ENCODE measurements at regions of chrX and their contacts with region 1.

Region 1: DNA sequence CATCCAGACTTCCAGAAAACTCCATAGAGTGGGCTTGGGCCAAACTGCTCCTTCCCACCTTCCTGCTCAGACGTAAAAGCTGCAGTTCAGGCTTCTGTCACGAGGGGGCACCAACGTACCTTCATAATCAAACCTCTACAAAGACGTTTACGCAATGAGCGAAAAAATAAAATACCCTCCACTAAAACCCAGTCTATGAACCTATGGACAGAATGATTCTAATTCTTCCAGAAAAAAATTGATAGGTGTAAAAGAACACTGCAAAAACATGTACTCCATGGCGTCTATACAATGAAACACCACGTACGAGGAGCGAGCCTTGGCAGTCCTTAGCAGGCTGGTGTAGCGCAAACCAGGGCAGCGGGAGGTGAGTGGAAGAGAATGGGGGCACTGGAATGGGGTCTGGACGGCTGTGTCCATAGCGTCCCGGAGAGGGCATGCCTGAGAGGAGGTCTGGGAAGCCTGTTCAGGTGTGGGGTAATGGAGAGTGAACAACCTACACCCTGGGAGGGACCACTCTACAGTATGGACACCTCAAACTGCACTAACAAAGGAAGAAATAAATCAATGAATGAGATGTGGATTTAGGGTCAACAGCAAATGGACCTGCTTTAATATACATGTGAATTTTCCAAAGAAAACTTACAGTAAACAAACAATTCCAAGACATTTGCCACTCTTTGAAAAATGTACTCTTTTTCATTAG is 14.4 kb upstream of the RAB40A start:
- DNase-seq: peak; percentile 74
- ATAC-seq: peak; percentile 63 to 75

Region 2: GRCh38 chrX:103404231-103405208 is 129.1 kb before region 1 on chrX:
- intact Hi-C with region 1: no loop called
- DNase-seq: peak; percentile 73
- ATAC-seq: peak; percentile 86 to 89

Region 3: GRCh38 chrX:103629318-103630170 is 95.9 kb after region 1 on chrX:
- intact Hi-C with region 1: loop called in 1 of 2 experiments (anchors 5 kb)
- DNase-seq: peak; percentile 74
- ATAC-seq: peak; percentile 90 to 97

Region 4: DNA sequence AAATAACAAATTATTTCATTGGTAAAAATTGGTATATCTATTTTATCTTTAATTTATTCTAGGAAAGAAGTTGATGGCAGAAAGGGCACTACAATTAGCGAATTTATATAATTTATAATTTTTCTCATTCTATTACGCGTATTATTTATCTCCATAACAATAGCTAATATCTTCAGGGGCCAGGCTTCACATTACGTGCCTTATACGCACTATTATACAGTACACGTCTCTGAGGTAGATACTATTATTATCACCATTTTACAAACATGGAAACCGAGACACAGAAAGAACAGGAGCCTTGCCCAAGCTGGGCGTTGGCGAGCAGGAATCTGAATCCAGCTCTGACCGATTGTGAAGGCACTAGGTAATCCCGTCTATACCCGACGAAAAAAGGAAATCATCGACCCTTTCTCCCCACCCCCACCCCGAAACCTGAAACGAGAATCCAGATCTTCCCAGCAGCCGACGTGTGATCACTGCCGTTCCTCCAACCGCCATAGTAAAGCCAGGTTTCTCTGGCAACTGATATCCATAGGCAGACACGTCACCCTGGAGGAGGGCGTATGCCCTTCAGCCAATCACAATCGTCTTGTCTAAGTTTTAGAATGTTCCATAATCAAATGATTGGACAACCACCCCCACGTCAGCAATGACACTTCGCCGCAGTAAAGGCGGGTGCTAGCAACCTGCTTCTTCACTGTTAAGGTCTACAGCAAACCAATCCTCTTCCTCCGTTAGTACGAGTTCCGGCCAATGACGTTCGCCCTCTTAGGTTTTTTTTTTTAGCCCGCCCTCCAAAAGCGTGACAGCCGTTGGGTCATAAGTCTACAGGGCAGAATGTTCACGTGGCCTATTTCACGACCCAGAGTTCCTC is 152.8 kb after region 1 on chrX and contains the start of gene MORF4L2:
- intact Hi-C with region 1: loop called in 1 of 2 experiments (anchors 10 kb)
- DNase-seq: peak; percentile 90
- ATAC-seq: peak; percentile 90 to 94
- total RNA-seq, gene MORF4L2: 191 to 248 TPM

Region 5: DNA sequence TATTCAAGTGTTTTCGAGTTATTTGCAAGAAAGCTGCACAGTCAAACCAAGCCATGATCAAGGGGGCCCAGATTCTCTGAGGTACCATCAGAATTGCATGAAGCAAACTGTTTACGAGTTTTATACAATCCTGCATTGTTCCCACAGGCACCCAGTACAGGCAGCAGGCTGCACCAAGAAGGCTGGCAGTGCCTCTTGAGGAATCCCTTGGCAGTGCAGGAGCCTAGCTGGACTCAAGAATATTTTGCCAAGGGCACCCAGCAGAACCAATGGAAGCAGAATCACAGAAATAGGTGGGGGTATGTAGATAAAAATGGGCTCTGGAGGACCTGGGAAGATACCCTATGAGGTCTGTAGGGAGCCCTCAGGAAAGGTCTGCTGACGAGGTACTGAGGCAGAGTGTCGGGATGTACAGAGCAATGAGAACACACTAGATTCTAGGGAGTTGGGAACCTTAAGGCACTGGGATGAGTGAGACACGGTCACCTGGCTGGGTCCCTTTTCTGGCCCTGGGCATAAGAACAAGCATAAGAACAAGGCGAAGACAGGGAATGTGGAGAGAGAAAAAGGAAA is 240.5 kb after region 1 on chrX:
- intact Hi-C with region 1: loop called in 1 of 2 experiments (anchors 5 kb)
- DNase-seq: no peak
- ATAC-seq: peak; percentile 41 to 55